Activated naive CD4-positive, alpha-beta T cell treated with anti-CD3 and anti-CD28 coated beads, Interleukin-2, amount 10 ng/mL, durations not matched to agents 7 days and 5 days (primary cell): ENCODE measurements at regions of chr10 and their contacts with region 1.

Region 1: DNA sequence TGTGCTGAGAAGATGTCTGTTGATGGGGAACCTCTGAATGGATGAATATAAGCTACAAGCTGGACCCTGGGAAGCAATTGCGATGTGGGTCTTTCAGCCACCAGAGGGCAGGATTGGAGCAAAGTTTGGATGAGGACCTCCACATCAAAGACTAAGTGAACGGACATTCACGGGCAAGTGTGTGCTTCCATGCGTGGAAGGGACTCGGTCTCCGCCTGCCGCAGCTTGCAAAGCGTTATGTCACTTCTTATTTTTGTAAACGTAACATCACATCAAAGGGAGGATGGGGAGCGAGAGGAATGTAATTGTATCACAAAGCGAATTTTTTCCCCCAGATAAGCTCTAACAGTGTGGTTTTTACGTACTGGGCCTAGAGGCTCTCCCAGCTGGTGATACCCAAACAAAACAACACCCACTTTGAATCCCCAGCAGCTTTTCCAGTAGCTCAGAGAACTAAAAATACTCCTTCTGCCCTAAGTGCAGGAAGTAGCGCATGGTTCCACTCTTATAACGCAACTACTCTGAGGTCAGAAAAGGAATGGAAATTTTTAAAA is 65.0 kb downstream of the VWA2 start:
- DNase-seq: peak; percentile 82
- H3K4me3 Mint-ChIP-seq: peak overlapping the region; percentile 73
- H3K27ac Mint-ChIP-seq: peak overlapping the region; percentile 29
- H3K4me1 Mint-ChIP-seq: peaks cover 11% of the 10 kb centered on the region
- H3K27me3 Mint-ChIP-seq: peaks cover 20% of the 10 kb centered on the region

Region 2: GRCh38 chr10:114388275-114388674 is 84.2 kb after region 1 on chr10:
- CTCF ChIA-PET with region 1: interaction called, 12 read pairs
- DNase-seq: no peak
- H3K4me3 Mint-ChIP-seq: no peak overlapping the region
- H3K27ac Mint-ChIP-seq: no peak overlapping the region
- H3K4me1 Mint-ChIP-seq: peaks cover 6% of the 10 kb centered on the region
- H3K27me3 Mint-ChIP-seq: peaks cover 47% of the 10 kb centered on the region

Region 3: DNA sequence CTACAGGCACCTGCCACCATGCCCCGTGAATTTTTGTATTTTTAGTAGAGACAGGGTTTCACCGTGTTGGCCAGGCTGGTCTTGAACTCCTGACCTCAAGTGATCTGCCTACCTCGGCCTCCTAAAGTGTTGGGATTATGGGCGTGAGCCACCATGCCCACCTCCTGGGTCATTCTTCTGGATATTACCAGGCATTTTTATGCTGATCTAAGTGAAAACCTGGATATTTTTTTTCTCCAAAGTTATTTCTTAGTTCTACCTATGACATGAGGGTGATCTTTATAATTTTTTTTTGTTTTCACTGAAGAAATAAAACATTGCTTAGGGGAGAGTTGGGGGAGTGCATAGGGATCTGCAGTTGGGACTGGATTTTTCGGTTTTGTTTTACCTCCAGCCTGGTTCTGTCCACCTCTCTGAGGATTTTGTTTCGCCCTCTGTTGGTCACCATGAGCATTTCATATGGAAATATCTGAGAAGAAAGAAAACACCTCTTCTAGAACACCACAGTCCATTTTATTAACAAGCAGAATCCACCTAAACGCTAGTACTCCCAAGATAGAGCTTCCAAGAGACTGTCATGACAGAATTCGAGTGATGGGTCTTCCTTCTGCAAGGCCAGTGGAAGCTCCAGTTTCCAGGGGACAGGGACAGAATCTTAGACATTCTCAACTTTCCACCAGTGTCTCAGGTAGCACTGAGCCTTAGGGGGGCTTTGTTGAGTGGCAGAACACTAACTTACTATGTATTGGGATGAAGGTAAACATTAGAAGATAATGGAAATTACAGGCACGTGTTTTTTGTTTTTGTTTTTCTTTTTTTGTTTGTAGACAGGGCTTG is 133.6 kb after region 1 on chr10:
- CTCF ChIA-PET with region 1: interaction called, 15 read pairs
- DNase-seq: no peak
- H3K4me3 Mint-ChIP-seq: no peak overlapping the region
- H3K27ac Mint-ChIP-seq: no peak overlapping the region
- H3K4me1 Mint-ChIP-seq: no peaks in the 10 kb centered on the region
- H3K27me3 Mint-ChIP-seq: no peaks in the 10 kb centered on the region

Region 4: DNA sequence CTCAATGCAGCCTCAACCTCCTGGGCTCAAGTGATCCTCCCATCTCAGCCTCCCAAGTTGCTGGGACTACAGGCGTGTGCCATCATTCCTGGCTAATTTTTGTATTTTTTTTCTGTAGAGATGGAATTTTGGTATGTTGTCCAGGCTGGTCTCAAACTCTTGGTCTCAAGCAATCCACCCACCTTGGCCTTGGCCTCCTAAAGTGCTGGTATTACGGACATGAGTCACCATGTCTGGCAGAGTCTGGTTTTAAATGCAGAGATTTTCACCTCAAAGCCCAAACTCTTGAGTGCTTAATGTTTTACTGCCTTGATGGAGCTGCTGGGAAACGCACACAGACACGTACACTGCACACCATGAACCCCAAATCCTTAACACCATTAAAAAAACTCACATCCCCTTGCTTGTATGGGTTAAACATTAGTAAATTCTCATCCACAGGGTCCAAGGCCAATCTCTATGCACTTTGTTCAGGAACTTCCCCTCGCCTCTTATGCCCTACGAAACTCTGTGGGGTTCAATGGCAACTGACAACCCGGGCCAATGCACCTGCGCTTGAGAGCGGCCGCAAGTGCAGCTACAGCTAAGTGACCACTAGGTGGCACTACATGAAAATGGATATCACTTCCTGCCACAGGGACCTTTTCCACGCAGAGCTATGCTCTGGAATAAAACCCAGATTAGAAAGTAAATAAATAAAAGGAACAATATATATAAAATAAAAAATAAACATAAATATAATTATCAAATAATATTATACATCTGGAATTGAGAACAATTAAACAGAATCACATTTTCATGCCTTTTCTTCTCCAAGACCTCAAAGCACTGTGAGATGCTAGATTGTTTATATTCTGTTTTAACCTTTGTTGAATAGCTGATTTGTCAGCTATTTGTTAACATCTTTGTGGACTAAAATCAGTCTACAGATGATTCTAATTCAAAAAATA is 167.1 kb after region 1 on chr10:
- CTCF ChIA-PET with region 1: interaction called, 17 read pairs
- DNase-seq: peak; percentile 74
- H3K4me3 Mint-ChIP-seq: no peak overlapping the region
- H3K27ac Mint-ChIP-seq: peak overlapping the region; percentile 0
- H3K4me1 Mint-ChIP-seq: peaks cover 33% of the 10 kb centered on the region
- H3K27me3 Mint-ChIP-seq: no peaks in the 10 kb centered on the region

Region 5: DNA sequence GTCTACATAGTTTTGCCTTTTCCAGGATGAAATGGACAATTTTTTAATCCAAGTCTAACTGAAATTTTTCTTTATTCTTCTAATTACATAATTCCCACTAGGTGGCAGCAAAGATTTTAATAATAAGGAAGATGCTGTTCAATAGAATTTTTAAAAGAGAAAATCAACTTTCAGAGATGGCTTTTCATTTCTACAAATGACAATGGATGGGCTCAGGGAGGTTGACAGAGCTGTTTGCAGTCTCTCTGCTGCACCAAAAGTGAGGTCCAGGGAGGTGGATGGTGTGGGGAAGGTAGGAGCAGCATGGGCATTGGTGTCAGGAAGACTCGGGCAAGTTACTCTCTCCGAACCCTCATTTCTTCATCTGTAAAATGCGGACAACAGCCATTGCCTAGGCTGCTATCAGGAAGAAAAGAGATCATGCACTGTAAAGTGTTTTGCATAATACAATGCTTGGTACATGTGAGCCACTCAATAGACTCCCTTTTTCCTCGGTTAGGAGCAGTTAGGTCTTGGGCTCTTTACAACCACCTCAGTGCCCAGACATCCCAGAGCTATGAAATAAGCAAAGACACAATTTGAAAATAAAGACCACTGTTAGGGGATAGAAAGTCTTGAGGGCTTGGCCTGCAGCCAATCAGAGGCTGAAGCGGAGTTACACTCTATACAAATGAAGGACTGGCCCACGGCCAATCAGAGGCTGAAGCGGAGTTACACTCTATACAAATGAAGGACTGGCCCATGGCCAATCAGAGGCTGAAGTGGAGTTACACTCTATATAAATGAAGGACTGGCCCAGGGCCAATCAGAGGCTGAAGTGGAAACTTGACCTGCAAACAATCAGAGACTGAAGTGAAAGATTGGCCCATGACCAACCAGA is 246.9 kb after region 1 on chr10:
- CTCF ChIA-PET with region 1: interaction called, 47 read pairs
- DNase-seq: no peak
- H3K4me3 Mint-ChIP-seq: no peak overlapping the region
- H3K27ac Mint-ChIP-seq: no peak overlapping the region
- H3K4me1 Mint-ChIP-seq: peaks cover 34% of the 10 kb centered on the region
- H3K27me3 Mint-ChIP-seq: peaks cover 10% of the 10 kb centered on the region

Region 6: GRCh38 chr10:114779803-114780609 is 475.9 kb after region 1 on chr10:
- CTCF ChIA-PET with region 1: interaction called, 12 read pairs
- DNase-seq: no peak
- H3K4me3 Mint-ChIP-seq: no peak overlapping the region
- H3K27ac Mint-ChIP-seq: no peak overlapping the region
- H3K4me1 Mint-ChIP-seq: peaks cover 11% of the 10 kb centered on the region
- H3K27me3 Mint-ChIP-seq: peaks cover 28% of the 10 kb centered on the region